ENCODE measurements at regions of chr3 and their contacts with region 1.

Region 1: DNA sequence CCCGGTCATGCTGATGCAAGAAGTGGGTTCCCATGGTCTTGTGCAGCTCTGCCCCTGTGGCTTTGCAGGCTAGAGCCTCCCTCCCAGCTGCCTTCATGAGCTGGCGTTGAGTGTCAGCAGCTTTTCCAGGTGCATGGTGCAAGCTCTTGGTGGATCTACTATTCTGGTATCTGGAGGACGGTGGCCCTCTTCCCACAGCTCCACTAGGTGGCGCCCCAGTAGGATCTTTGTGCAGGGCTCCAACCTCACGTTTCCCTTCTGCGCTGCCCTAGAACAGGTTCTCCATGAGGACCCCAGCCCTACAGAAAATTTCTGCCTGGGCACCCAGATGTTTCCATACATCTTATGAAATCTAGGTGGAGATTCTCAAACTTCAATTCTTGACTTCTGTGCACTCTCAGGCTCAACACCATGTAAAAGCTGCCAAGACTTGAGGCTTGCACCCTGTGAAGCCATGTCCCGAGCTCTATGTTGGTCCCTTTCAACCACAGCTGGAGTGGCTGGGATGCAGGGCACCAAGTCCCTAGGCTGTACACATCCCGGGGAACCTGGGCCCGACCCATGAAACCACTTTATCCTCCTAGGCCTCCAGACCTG is 238.4 kb upstream of the MDFIC2 start:
- DNase-seq: peak; percentile 64 to 75
- H3K4me3 ChIP-seq: no peak overlapping the region
- H3K27ac ChIP-seq: no peak overlapping the region
- H3K4me1 ChIP-seq: no peaks in the 10 kb centered on the region
- H3K27me3 ChIP-seq: no peaks in the 10 kb centered on the region
- CTCF ChIP-seq: peak; percentile 50 to 78 (median 61)
- POLR2A ChIP-seq: no peak

Region 2: GRCh38 chr3:71652781-71653413 is 1102.1 kb after region 1 on chr3:
- intact Hi-C with region 1: loop called (anchors 2 kb)
- DNase-seq: peak; percentile 60 to 61
- H3K4me3 ChIP-seq: no peak overlapping the region
- H3K27ac ChIP-seq: no peak overlapping the region
- H3K4me1 ChIP-seq: peaks cover 5 to 14% of the 10 kb centered on the region in 2 donors
- H3K27me3 ChIP-seq: no peaks in the 10 kb centered on the region
- CTCF ChIP-seq: peak in 5 of 6 experiments; percentile 12 to 69 (median 52)
- POLR2A ChIP-seq: no peak

Measured in thyroid gland (tissue), 4 donors.